ENCODE measurements at regions of chr6 and their contacts with region 1.

Region 1: GRCh38 chr6:121686611-121687023 is 251.2 kb downstream of the GJA1 start:
- DNase-seq: no peak
- H3K4me3 ChIP-seq: no peak overlapping the region
- CTCF ChIP-seq: no peak

Region 2: DNA sequence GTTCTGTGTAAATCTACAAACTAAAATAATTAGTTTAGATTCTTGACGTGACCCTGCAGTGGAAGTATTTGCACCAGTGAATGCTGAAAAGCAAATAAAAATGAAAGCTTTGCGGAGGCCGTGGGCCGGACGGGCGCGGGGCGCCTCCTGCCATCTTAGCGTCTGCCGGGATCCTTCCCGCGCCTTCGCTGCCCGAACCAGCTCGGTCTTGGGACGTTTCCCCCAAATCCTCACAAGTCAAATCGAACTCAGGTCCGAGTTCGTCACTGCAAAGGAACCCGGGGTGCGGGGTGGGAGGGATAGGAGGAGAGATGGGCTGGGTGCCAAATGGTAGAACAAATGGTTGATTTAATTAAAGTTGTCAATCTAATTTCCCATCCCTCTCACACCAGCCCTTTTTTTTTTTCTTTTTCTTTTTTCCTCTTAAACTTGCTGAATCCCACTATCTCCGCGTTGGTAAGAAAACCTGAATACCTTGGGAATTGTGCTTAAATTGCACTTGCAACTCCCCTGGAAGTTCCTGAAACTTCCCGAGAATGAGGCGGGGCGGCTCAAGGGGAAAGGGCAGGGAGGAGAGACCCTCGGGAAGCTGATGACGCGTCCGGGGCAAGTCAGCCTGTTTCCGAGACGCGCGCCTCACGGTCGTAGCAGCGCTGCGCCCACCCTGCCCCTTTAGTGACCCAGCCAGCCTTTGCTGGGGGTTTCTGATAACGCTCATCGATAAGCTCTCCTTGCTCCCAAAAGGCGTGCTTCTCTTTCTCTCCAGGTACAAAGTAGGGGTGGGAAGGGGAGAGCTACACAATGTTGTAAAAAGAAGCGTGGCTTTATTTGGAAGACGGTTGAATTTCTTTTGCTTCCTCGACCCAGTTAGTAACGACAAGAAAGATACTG is 249.4 kb before region 1 on chr6:
- in situ Hi-C with region 1: loop called (anchors 5 kb)
- DNase-seq: no peak
- H3K4me3 ChIP-seq: peak overlapping the region; percentile 66
- CTCF ChIP-seq: no peak

Region 3: GRCh38 chr6:121639031-121639430 is 47.6 kb before region 1 on chr6:
- in situ Hi-C with region 1: no loop called
- DNase-seq: no peak
- H3K4me3 ChIP-seq: no peak overlapping the region
- CTCF ChIP-seq: no peak